ENCODE measurements at regions of chr17 and their contacts with region 1.

Region 1: GRCh38 chr17:39636927-39637736 is at the start of gene STARD3:
- DNase-seq: peak; percentile 98
- CTCF ChIP-seq: no peak

Region 2: DNA sequence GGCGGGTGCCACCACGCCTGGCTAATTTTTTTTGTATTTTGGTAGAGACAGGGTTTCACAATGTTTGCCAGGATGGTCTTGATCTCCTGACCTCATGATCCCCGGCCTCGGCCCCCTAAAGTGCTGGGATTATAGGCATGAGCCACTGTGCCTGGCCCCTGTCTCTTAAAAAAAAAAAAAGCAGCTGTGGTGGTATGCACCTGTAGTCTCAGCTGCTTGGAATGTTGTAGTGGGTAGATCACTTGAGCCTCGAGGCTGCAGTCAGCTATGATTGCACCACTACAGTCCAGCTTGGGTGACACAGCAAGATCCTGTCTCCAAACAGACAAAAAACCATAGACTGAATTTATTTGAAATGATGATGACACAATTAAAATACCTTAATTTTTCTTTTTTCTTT is 151.6 kb before region 1 on chr17:
- in situ Hi-C with region 1: no loop called
- DNase-seq: no peak
- CTCF ChIP-seq: no peak

Region 3: GRCh38 chr17:39517224-39517623 is 119.9 kb before region 1 on chr17:
- in situ Hi-C with region 1: no loop called
- DNase-seq: no peak
- CTCF ChIP-seq: no peak

Region 4: DNA sequence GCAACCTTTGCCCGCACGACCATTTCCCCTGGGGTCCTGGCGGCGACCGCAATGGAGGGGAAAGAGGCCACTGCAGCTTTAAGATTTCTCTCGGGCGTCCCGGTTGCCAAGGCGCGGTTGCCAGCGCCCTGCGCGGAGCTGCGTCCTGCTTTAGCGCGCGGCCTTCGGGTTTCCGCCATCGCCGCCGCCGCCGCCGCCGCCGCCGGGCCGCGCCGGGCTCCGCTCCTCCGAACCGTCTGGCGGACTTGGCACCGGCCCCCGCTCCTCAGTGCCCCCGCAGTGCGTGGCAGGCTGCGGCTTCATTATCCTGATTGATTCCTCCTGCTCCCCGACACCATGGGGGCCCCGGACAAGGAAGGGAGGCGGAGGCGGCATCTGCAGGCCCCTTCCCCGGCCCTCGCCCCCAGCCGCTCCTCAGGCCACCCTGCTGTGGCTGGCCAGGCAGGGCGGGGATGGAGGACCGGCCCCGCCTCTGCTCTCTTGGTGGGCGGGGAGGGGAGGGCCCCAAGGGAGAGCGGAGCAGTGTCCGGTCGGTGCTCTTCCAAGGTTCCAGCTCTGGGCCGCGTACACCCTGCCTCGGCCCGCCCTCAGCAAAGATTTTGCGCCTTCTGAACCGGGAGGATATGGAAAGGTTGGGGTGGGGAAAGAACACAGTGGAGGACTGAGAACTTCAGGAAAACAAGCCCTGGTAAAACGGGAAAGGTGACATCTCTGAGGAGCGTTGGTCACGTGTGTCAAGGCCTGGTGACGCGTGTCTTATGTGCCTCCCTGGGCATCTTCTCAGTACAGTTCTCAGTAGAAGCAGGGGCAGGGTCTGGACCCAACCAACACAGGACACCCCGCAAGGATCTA is 63.5 kb before region 1 on chr17:
- in situ Hi-C with region 1: no loop called
- DNase-seq: peak; percentile 85
- CTCF ChIP-seq: no peak

Region 5: GRCh38 chr17:39740357-39741131 is 103.4 kb after region 1 on chr17:
- in situ Hi-C with region 1: loop called (anchors 10 kb)
- DNase-seq: no peak
- CTCF ChIP-seq: no peak

Measured in GM13976 (cell line).